ENCODE measurements at regions of chr9 and their contacts with region 1.

Region 1: DNA sequence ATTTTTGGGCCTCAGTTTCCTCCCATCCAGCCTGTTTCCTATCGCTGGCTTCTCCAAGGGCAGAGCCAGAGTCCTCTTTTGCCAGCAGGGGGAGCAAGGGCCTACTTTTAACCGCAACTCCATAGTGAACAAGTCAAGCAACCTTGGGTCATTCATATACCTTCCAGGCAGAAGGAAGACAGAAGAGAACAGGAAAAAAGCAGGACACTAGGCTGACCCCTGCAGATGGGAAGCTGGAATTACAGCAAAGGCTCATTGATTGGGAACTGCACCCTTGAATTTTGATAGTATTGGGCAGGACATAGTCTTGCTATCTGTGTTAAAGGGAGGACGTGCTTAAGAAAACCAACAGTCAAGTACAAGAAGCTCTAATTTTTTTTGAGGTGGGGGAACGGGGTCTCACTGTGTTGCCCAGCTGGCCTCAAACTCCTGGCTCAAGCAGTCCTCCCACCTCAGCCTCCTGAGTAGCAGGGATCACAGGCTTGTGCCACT is 30.1 kb downstream of the QRFP start:
- DNase-seq: no peak
- ATAC-seq: peak; percentile 11

Region 2: GRCh38 chr9:130707225-130707976 is 159.1 kb before region 1 on chr9:
- intact Hi-C with region 1: loop called (anchors 2 kb)
- DNase-seq: no peak
- ATAC-seq: peak; percentile 30

Region 3: GRCh38 chr9:130932255-130933079 is 65.9 kb after region 1 on chr9:
- intact Hi-C with region 1: loop called (anchors 5 kb)
- DNase-seq: peak; percentile 86
- ATAC-seq: peak; percentile 90

Region 4: DNA sequence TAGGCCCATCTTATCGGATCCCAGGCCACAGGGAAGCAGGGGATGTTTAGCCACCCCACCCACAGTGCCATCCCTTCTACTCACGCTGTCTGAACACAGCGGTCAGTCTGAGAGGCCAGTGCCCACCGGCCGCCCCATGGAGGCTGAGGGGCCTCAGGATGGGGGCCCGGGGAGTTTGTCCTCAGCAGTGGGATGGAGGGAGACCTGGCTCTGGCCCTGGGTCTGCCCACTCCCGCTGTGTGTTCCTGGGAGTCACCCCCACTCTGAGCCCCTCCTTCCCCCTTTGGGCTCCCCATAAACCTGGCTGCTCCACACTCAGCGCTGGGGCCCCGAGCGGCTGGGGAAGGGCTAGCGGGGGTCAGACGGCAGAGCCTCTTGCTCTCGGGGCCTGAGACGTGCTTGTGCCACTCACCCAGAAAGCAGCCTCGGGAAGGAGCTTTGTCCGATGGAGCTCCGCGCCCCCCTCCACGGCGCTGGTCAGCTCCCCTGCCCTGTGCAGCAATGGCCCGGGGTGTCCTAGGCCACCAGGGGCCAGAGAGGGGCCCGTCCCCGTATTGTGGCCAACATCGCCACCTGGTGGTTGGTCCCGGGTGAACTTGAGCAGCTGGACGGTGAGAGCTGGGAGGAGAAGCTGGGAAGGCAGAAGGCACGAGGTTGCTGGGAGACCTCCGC is 131.5 kb after region 1 on chr9:
- intact Hi-C with region 1: loop called (anchors 5 kb)
- DNase-seq: peak; percentile 82
- ATAC-seq: peak; percentile 92